H1 (cell line): ENCODE measurements at regions of chr2 and their contacts with region 1.

Region 1: GRCh38 chr2:240455351-240456305 is 20.2 kb downstream of the GPC1 start:
- DNase-seq: peak in 1 of 2 experiments; percentile 68
- H3K4me3 ChIP-seq: peak overlapping the region in 3 of 4 experiments; percentile 17 to 54 (median 19); a peak in 3 of 8 replicates
- H3K27ac ChIP-seq: no peak overlapping the region
- H3K4me1 ChIP-seq: peaks cover 2 to 71% (median 42%) of the 10 kb centered on the region in 4 experiments
- H3K27me3 ChIP-seq: peaks cover 15 to 35% (median 28%) of the 10 kb centered on the region in 4 experiments
- CTCF ChIP-seq: no peak
- EP300 ChIP-seq: no peak
- POLR2A ChIP-seq: no peak
- RAD21 ChIP-seq: no peak

Region 2: GRCh38 chr2:240434728-240435456 is 20.7 kb before region 1 on chr2:
- CTCF ChIA-PET with region 1: interaction called, 13 read pairs
- POLR2A ChIA-PET with region 1: interaction called, 12 read pairs
- DNase-seq: peak in 1 of 2 experiments; percentile 95
- H3K4me3 ChIP-seq: peak overlapping the region; percentile 56 to 93 (median 66)
- H3K27ac ChIP-seq: no peak overlapping the region
- H3K4me1 ChIP-seq: peaks cover 0 to 16% (median 1%) of the 10 kb centered on the region in 4 experiments; a peak in 6 of 7 replicates
- H3K27me3 ChIP-seq: peaks cover 14 to 36% (median 23%) of the 10 kb centered on the region in 4 experiments
- CTCF ChIP-seq: no peak
- EP300 ChIP-seq: no peak
- POLR2A ChIP-seq: no peak
- RAD21 ChIP-seq: no peak

Region 3: GRCh38 chr2:240502430-240503121 is 46.9 kb after region 1 on chr2:
- CTCF ChIA-PET with region 1: no interaction called
- POLR2A ChIA-PET with region 1: no interaction called
- DNase-seq: no peak
- H3K4me3 ChIP-seq: no peak overlapping the region
- H3K27ac ChIP-seq: no peak overlapping the region
- H3K4me1 ChIP-seq: no peaks in the 10 kb centered on the region
- H3K27me3 ChIP-seq: peaks cover 0 to 2% (median 0%) of the 10 kb centered on the region in 4 experiments; a peak in 1 of 7 replicates
- CTCF ChIP-seq: no peak
- EP300 ChIP-seq: no peak
- POLR2A ChIP-seq: no peak
- RAD21 ChIP-seq: no peak

Region 4: GRCh38 chr2:240604291-240604938 is 148.8 kb after region 1 on chr2:
- CTCF ChIA-PET with region 1: no interaction called
- POLR2A ChIA-PET with region 1: no interaction called
- DNase-seq: peak in 1 of 2 experiments; percentile 27
- H3K4me3 ChIP-seq: no peak overlapping the region
- H3K27ac ChIP-seq: no peak overlapping the region
- H3K4me1 ChIP-seq: no peaks in the 10 kb centered on the region
- H3K27me3 ChIP-seq: 0 out of 7 replicates have a peak, but pooled peaks cover 0 to 2% (median 0%) of the 10 kb centered on the region in 4 experiments
- CTCF ChIP-seq: peak in 2 of 3 experiments; percentile 66 to 85; a peak in 3 of 4 replicates
- EP300 ChIP-seq: no peak
- POLR2A ChIP-seq: no peak
- RAD21 ChIP-seq: peak; percentile 42 to 56; a peak in 3 of 4 replicates